ENCODE measurements at regions of chr1 and their contacts with region 1.

Region 1: GRCh38 chr1:65959896-65960567 is 167.3 kb downstream of the PDE4B start:
- DNase-seq: no peak
- H3K4me3 ChIP-seq: no peak overlapping the region
- H3K27ac ChIP-seq: no peak overlapping the region
- H3K4me1 ChIP-seq: no peaks in the 10 kb centered on the region
- H3K27me3 ChIP-seq: no peaks in the 10 kb centered on the region
- CTCF ChIP-seq: no peak
- POLR2A ChIP-seq: no peak

Region 2: GRCh38 chr1:66247415-66248208 is 287.6 kb after region 1 on chr1:
- intact Hi-C with region 1: loop called (anchors 5 kb)
- DNase-seq: no peak
- H3K4me3 ChIP-seq: no peak overlapping the region
- H3K27ac ChIP-seq: peak overlapping the region; percentile 33 to 55
- H3K4me1 ChIP-seq: no peaks in the 10 kb centered on the region
- H3K27me3 ChIP-seq: no peaks in the 10 kb centered on the region
- CTCF ChIP-seq: no peak
- POLR2A ChIP-seq: no peak

Region 3: GRCh38 chr1:66452162-66452561 is 492.1 kb after region 1 on chr1:
- intact Hi-C with region 1: loop called (anchors 5 kb)
- DNase-seq: no peak
- H3K4me3 ChIP-seq: no peak overlapping the region
- H3K27ac ChIP-seq: no peak overlapping the region
- H3K4me1 ChIP-seq: no peaks in the 10 kb centered on the region
- H3K27me3 ChIP-seq: no peaks in the 10 kb centered on the region
- CTCF ChIP-seq: no peak
- POLR2A ChIP-seq: no peak